ENCODE measurements at regions of chr4 and their contacts with region 1.

Region 1: GRCh38 chr4:113901994-113902787 is 77.3 kb downstream of the ARSJ start:
- DNase-seq: peak; percentile 74
- H3K4me3 Mint-ChIP-seq: peak overlapping the region; percentile 51
- H3K27ac Mint-ChIP-seq: peak overlapping the region; percentile 85
- H3K4me1 Mint-ChIP-seq: peaks cover 19% of the 10 kb centered on the region
- H3K27me3 Mint-ChIP-seq: no peaks in the 10 kb centered on the region
- CTCF ChIP-seq: peak; percentile 37

Region 2: GRCh38 chr4:114180481-114180880 is 278.3 kb after region 1 on chr4:
- CTCF ChIA-PET with region 1: no interaction called
- intact Hi-C with region 1: loop called (anchors 5 kb)
- DNase-seq: peak; percentile 59
- H3K4me3 Mint-ChIP-seq: no peak overlapping the region
- H3K27ac Mint-ChIP-seq: no peak overlapping the region
- H3K4me1 Mint-ChIP-seq: peaks cover 13% of the 10 kb centered on the region
- H3K27me3 Mint-ChIP-seq: no peaks in the 10 kb centered on the region
- CTCF ChIP-seq: peak; percentile 34

Measured in Calu3 (cell line).